Tibial artery (tissue), 4 donors: ENCODE measurements at regions of chr10 and their contacts with region 1.

Region 1: GRCh38 chr10:28060031-28060607 is 61.2 kb upstream of the ODAD2 start:
- DNase-seq: no peak
- H3K4me3 ChIP-seq: no peak overlapping the region
- H3K27ac ChIP-seq: peak overlapping the region in 1 of 2 donors; percentile 6
- H3K4me1 ChIP-seq: peaks cover 0 to 37% (median 4%) of the 10 kb centered on the region in 4 donors
- H3K27me3 ChIP-seq: no peaks in the 10 kb centered on the region
- CTCF ChIP-seq: no peak

Region 2: DNA sequence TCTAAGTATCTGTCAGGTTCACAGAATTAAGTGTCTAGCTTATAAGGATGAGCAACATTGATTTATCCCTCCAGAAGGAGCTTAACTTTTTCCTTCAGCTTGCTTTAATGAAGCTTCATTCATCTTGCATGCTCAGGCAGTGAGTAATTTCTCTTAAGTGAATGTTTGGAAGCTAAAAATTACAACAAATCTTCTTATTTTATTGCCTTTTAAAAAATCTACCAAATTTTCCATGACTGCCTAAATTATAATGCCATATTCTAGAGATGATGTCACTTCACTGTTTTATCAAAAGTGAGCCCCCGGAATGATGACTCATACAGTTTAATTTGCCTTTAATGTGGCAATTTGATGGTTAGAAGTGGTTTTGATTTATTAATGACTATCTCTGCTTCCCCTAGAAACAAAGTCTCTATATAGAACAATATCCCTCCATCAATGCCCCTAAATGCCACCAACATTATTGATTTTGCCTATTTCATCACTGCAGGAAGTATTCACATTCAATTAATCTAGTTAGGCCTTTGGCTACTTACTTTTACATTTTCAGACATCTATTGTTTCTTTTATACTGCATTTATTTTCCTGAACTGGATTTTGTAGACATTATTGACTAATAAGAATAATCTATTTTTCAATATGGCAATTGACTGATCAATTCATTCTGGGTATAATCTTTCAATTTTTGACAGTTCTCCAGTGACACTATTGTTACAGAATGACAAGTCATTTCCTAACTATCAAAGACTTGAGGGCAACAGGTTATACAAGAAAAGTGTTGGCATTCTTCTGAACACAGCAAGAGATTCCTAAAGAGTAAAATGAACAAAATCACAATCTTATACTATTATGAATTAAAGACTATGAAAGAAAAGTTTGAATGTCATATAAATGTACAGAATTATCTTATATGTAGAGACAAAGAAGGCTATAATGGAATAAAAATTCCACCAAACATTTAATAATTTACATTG is 78.1 kb after region 1 on chr10:
- intact Hi-C with region 1: no loop called
- DNase-seq: no peak
- H3K4me3 ChIP-seq: no peak overlapping the region
- H3K27ac ChIP-seq: peak overlapping the region in 1 of 2 donors; percentile 1
- H3K4me1 ChIP-seq: peaks cover 0 to 12% (median 0%) of the 10 kb centered on the region in 4 donors
- H3K27me3 ChIP-seq: no peaks in the 10 kb centered on the region
- CTCF ChIP-seq: no peak

Region 3: DNA sequence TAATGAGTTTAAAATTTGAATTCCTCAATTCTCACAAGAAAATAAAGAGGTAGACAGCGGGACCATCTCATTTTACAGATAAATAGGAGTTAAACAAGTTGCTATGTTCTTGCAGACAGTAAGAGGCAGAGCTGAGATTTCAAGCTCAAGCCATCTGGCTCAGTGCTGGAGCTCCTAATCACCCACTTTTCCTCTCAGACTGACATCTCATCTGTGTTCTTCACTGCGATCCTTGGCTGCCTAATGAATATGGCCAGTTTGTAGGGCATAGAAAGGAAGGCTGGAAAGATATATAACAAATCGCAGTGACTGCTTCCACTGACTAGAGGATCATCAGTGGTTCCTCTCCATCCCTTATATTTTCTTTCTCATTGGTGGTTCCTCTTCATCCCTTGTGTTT is 91.5 kb after region 1 on chr10:
- intact Hi-C with region 1: loop called (anchors 10 kb)
- DNase-seq: no peak
- H3K4me3 ChIP-seq: no peak overlapping the region
- H3K27ac ChIP-seq: no peak overlapping the region
- H3K4me1 ChIP-seq: peaks cover 0 to 27% (median 0%) of the 10 kb centered on the region in 4 donors
- H3K27me3 ChIP-seq: no peaks in the 10 kb centered on the region
- CTCF ChIP-seq: no peak

Region 4: GRCh38 chr10:28181478-28182096 is 121.5 kb after region 1 on chr10:
- intact Hi-C with region 1: no loop called
- DNase-seq: no peak
- H3K4me3 ChIP-seq: no peak overlapping the region
- H3K27ac ChIP-seq: no peak overlapping the region
- H3K4me1 ChIP-seq: peaks cover 0 to 54% (median 2%) of the 10 kb centered on the region in 4 donors
- H3K27me3 ChIP-seq: no peaks in the 10 kb centered on the region
- CTCF ChIP-seq: peak in 1 of 2 experiments; percentile 17